PC-9 (cell line): ENCODE measurements at regions of chr6 and their contacts with region 1.

Region 1: DNA sequence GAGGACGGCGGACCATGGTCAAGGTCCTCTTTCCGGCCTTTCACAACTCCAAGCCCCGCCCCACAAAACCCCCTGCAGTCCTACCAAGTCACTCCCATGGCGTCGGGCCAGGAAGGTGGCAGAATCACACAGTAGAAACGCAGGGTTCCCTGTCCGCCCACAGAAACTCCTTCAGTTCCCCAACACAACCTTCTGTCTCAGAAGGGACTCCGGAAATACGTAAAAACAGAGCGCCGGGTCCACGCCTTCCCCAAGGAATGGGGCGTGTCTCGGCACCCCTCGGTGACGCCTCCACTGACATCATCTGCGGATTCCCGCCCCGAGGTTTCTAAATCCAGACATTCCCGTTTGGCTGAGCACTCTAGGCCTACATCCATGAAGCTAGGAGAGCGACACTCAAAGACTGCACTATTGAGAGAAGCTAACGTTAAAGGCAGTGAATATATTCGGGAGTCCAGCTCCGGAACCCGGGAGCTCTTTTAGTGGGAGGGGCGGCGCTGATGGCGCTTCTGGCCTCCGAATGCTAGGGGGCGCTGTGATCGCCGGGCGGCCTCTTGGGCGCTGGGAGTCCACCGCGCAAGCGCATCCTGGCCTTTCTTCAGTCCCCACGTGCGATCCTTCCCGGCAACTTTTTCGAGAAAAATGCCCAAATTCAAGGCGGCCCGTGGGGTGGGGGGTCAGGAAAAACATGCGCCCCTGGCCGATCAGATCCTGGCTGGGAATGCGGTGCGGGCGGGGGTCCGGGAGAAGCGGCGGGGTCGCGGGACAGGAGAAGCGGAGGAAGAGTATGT is at the starts of genes BYSL and MED20:
- DNase-seq: peak; percentile 89 to 92
- H3K4me3 ChIP-seq: peak within 1 kb of the TSS; percentile 63
- H3K27ac ChIP-seq: peak within 1 kb of the TSS; percentile 88
- H3K4me1 ChIP-seq: peaks cover 42% of the 10 kb centered on the region
- H3K27me3 ChIP-seq: no peaks in the 10 kb centered on the region
- CTCF ChIP-seq: peak; percentile 99
- total RNA-seq, gene BYSL: 33.0 and 36.5 TPM in 2 replicates
- total RNA-seq, gene MED20: 45.8 and 61.8 TPM in 2 replicates

Region 2: GRCh38 chr6:41787219-41787917 is 133.7 kb before region 1 on chr6 and contains the start of gene TOMM6:
- CTCF ChIA-PET with region 1: interaction called, 10 read pairs
- POLR2A ChIA-PET with region 1: interaction called, 9 read pairs
- intact Hi-C with region 1: loop called (anchors 1 kb)
- DNase-seq: peak; percentile 83 to 92
- H3K4me3 ChIP-seq: peak within 1 kb of the TSS; percentile 100
- H3K27ac ChIP-seq: peak within 1 kb of the TSS; percentile 91
- H3K4me1 ChIP-seq: peaks cover 42% of the 10 kb centered on the region
- H3K27me3 ChIP-seq: no peaks in the 10 kb centered on the region
- CTCF ChIP-seq: peak; percentile 88
- total RNA-seq, gene TOMM6: 143 and 170 TPM in 2 replicates

Region 3: GRCh38 chr6:41801380-41801779 is 119.7 kb before region 1 on chr6:
- CTCF ChIA-PET with region 1: interaction called, 4 read pairs
- POLR2A ChIA-PET with region 1: no interaction called
- intact Hi-C with region 1: loop called (anchors 5 kb)
- DNase-seq: peak in 1 of 2 experiments; percentile 25
- H3K4me3 ChIP-seq: no peak overlapping the region
- H3K27ac ChIP-seq: no peak overlapping the region
- H3K4me1 ChIP-seq: no peaks in the 10 kb centered on the region
- H3K27me3 ChIP-seq: no peaks in the 10 kb centered on the region
- CTCF ChIP-seq: peak; percentile 72

Region 4: DNA sequence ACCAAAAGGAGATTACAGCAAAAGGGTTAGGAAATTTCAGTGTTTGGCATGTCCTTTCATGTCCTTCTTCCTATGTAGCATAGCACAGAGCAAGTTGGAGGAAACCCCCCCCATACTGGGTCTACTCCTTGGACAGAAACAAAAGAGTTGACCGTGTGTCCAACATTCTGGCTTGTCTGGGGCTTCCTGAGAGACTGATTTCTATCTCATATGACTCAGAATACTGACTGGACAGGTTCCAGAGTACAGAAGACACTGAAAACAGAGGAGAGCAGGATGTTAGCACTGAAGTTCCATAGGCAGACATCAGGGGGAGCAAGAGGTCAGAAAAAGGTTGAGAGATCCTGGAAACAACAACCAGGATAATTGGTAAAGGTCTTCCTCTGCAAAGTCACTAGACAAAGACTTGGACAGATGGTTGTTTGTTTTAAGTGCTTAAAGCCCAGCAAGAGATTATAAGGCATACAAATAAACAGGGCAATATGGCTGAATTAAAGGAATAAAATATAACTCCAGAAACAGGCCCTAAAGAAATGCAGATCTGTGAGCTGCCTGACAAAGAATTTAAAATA is 74.4 kb before region 1 on chr6:
- CTCF ChIA-PET with region 1: no interaction called
- POLR2A ChIA-PET with region 1: no interaction called
- intact Hi-C with region 1: loop called (anchors 2 kb)
- DNase-seq: peak; percentile 79 to 93
- H3K4me3 ChIP-seq: no peak overlapping the region
- H3K27ac ChIP-seq: peak overlapping the region; percentile 56
- H3K4me1 ChIP-seq: peaks cover 9% of the 10 kb centered on the region
- H3K27me3 ChIP-seq: no peaks in the 10 kb centered on the region
- CTCF ChIP-seq: peak; percentile 85

Region 5: GRCh38 chr6:41895300-41896233 is 25.5 kb before region 1 on chr6 and contains the start of gene USP49:
- CTCF ChIA-PET with region 1: no interaction called
- POLR2A ChIA-PET with region 1: interaction called, 6 read pairs
- intact Hi-C with region 1: loop called (anchors 2 kb)
- DNase-seq: peak; percentile 79 to 85
- H3K4me3 ChIP-seq: peak within 1 kb of the TSS; percentile 69
- H3K27ac ChIP-seq: peak within 1 kb of the TSS; percentile 79
- H3K4me1 ChIP-seq: peaks cover 16% of the 10 kb centered on the region
- H3K27me3 ChIP-seq: no peaks in the 10 kb centered on the region
- CTCF ChIP-seq: no peak
- total RNA-seq, gene USP49: 10.9 and 13.9 TPM in 2 replicates

Region 6: DNA sequence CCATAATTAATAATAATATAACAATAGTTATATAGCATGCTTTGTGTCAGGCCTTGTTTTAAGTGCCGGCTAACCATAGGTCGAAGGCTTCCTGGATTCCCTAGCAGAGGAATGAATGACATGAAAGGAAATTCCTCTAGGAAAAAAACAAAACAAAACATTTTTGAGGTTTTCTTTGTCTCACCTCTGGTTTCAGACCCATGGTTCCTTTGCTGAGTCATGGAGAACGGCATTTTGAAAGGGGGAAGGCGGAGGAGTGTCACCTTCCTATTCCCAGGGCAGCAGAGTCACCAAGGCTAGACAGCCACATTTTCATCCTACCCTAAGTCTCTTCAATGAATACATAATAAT is 45.8 kb after region 1 on chr6:
- CTCF ChIA-PET with region 1: interaction called, 3 read pairs
- POLR2A ChIA-PET with region 1: no interaction called
- intact Hi-C with region 1: loop called (anchors 1 kb)
- DNase-seq: peak; percentile 74 to 88
- H3K4me3 ChIP-seq: no peak overlapping the region; the same call in 1 of the 2 replicates
- H3K27ac ChIP-seq: peak overlapping the region; percentile 98
- H3K4me1 ChIP-seq: peaks cover 44% of the 10 kb centered on the region
- H3K27me3 ChIP-seq: no peaks in the 10 kb centered on the region
- CTCF ChIP-seq: no peak

Region 7: DNA sequence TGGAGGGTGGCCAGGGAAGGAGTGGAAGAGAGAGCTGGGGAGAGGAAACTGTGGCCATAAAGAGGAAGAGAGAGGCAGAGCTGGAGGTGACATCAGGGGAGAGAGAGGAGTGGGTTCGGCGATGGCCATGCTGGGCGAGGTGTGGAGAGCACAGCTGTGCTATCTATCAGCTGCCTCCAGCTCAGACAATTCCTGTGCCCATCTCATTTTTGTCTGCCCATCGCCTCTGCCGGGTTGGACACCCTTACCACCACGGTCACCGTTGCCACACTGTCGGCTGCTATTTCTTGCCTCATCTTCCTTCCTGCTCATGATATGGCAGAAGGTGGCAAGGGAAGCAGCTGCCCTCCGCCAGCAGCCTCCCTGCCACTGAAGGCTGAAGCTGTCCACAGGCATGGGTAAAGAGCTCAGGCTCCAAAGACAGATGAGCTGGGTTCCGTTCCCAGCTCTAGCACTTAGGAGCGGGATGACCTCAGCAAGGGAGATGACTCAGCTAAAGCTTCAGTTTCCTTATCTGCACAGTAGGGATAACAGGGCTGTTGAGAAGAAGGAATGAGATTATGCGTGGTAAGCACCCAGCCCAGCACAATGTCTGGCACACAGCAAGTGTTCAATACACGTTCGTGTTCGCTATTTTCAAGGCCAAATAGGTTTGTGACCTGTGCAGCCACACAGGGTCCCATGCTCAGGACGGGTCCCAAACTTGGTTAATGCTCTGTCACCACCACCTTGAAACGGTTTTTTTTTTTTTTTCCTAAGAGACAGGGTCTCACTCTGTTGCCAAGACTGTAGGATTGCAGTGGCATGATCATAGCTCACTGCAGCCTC is 107.3 kb after region 1 on chr6:
- CTCF ChIA-PET with region 1: interaction called, 24 read pairs
- POLR2A ChIA-PET with region 1: no interaction called
- intact Hi-C with region 1: no loop called
- DNase-seq: no peak
- H3K4me3 ChIP-seq: no peak overlapping the region
- H3K27ac ChIP-seq: no peak overlapping the region
- H3K4me1 ChIP-seq: peaks cover 14% of the 10 kb centered on the region
- H3K27me3 ChIP-seq: no peaks in the 10 kb centered on the region
- CTCF ChIP-seq: no peak

Region 8: GRCh38 chr6:42428326-42429041 is 507.4 kb after region 1 on chr6:
- CTCF ChIA-PET with region 1: no interaction called
- POLR2A ChIA-PET with region 1: no interaction called
- intact Hi-C with region 1: no loop called
- DNase-seq: no peak
- H3K4me3 ChIP-seq: no peak overlapping the region
- H3K27ac ChIP-seq: no peak overlapping the region
- H3K4me1 ChIP-seq: no peaks in the 10 kb centered on the region
- H3K27me3 ChIP-seq: no peaks in the 10 kb centered on the region
- CTCF ChIP-seq: no peak